ENCODE measurements at regions of chr2 and their contacts with region 1.

Region 1: DNA sequence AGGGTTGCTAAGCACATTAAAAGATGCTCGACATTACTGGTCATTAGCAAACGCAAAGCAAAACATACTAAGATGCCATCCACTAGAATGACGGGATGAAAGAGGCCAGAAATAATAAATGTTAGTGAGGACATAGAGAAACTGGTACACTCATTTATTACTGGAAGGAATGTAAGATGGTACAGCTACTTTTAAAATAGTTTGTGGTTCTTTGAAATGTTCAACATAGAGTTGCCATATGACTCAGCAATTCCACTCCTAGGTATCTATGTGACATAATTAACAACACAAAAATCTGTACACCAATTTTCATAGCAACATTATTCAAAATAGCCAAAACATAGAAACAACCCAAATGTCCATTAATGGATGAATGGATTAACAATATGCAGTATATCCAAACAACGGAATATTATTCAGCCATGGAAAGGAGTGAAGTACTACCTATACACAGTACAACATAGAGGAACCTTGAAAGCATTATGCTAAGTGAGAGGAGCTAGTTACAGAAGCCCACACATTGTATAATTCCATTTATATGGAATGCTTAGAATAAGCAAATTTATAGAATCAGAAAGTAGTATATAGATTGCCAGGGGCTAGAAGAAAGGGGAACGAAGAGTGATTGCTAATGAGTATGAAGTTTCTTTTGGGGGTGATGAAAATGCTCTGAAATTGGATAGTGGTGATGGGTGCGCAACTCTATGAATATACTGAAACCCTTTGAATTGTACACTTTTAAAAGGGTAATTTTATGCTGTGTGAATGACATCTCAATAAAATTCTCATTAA is 61.9 kb upstream of the IL1R1 start:
- DNase-seq: no peak
- ATAC-seq: no peak
- H3K4me3 ChIP-seq: no peak overlapping the region
- H3K4me3 Mint-ChIP-seq: no peak overlapping the region
- H3K27ac ChIP-seq: no peak overlapping the region
- H3K27ac Mint-ChIP-seq: no peak overlapping the region
- H3K4me1 ChIP-seq: peaks cover 24% of the 10 kb centered on the region
- H3K4me1 Mint-ChIP-seq: peaks cover 34% of the 10 kb centered on the region
- H3K27me3 ChIP-seq: no peaks in the 10 kb centered on the region
- H3K27me3 Mint-ChIP-seq: no peaks in the 10 kb centered on the region
- CTCF ChIP-seq: no peak

Region 2: GRCh38 chr2:101638181-101638711 is 442.4 kb before region 1 on chr2:
- CTCF ChIA-PET with region 1: no interaction called
- POLR2A ChIA-PET with region 1: no interaction called
- intact Hi-C with region 1: no loop called
- DNase-seq: no peak
- ATAC-seq: no peak
- H3K4me3 ChIP-seq: no peak overlapping the region
- H3K4me3 Mint-ChIP-seq: no peak overlapping the region
- H3K27ac ChIP-seq: no peak overlapping the region
- H3K27ac Mint-ChIP-seq: no peak overlapping the region
- H3K4me1 ChIP-seq: no peaks in the 10 kb centered on the region
- H3K4me1 Mint-ChIP-seq: no peaks in the 10 kb centered on the region
- H3K27me3 ChIP-seq: no peaks in the 10 kb centered on the region
- H3K27me3 Mint-ChIP-seq: no peaks in the 10 kb centered on the region
- CTCF ChIP-seq: no peak

Region 3: GRCh38 chr2:102094917-102095316 is 14.3 kb after region 1 on chr2:
- CTCF ChIA-PET with region 1: interaction called, 3 read pairs
- POLR2A ChIA-PET with region 1: interaction called, 6 read pairs
- intact Hi-C with region 1: loop called in 1 of 2 experiments (anchors 1 kb)
- DNase-seq: peak in 1 of 9 experiments; percentile 23
- ATAC-seq: no peak
- H3K4me3 ChIP-seq: no peak overlapping the region
- H3K4me3 Mint-ChIP-seq: no peak overlapping the region
- H3K27ac ChIP-seq: no peak overlapping the region
- H3K27ac Mint-ChIP-seq: no peak overlapping the region
- H3K4me1 ChIP-seq: no peaks in the 10 kb centered on the region
- H3K4me1 Mint-ChIP-seq: no peaks in the 10 kb centered on the region
- H3K27me3 ChIP-seq: no peaks in the 10 kb centered on the region
- H3K27me3 Mint-ChIP-seq: no peaks in the 10 kb centered on the region
- CTCF ChIP-seq: no peak

Region 4: GRCh38 chr2:102103992-102104871 is 23.6 kb after region 1 on chr2:
- CTCF ChIA-PET with region 1: no interaction called
- POLR2A ChIA-PET with region 1: no interaction called
- intact Hi-C with region 1: loop called in 1 of 2 experiments (anchors 2 kb)
- DNase-seq: peak in 7 of 9 experiments; percentile 6 to 63 (median 37)
- ATAC-seq: peak; percentile 40
- H3K4me3 ChIP-seq: peak overlapping the region in 1 of 2 experiments; percentile 31
- H3K4me3 Mint-ChIP-seq: peak overlapping the region; percentile 73
- H3K27ac ChIP-seq: no peak overlapping the region
- H3K27ac Mint-ChIP-seq: no peak overlapping the region
- H3K4me1 ChIP-seq: no peaks in the 10 kb centered on the region
- H3K4me1 Mint-ChIP-seq: peaks cover 14% of the 10 kb centered on the region
- H3K27me3 ChIP-seq: no peaks in the 10 kb centered on the region
- H3K27me3 Mint-ChIP-seq: peaks cover 9% of the 10 kb centered on the region
- CTCF ChIP-seq: no peak